GM13976 (cell line): ENCODE measurements at regions of chr7 and their contacts with region 1.

Region 1: DNA sequence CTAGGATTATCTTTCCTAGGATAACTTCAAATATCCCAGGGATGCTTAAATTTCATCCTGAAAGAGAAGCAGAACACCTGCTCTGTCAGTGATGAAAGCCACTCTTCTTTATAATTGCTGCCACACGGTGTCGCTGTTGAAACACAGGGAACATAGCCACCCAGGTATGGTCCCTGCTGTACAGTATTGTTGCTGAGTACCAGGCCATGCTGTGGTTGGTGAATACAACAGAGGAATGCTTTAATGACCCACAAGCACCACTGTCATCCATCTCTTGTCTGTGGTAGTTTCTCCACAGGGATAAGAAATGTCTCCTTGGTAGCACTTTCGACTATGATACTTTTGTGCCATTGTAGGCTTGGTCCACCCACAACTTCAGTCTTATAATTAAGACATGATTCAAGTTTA is 70.6 kb upstream of the STARD3NL start:
- DNase-seq: peak; percentile 48
- CTCF ChIP-seq: peak; percentile 79

Region 2: DNA sequence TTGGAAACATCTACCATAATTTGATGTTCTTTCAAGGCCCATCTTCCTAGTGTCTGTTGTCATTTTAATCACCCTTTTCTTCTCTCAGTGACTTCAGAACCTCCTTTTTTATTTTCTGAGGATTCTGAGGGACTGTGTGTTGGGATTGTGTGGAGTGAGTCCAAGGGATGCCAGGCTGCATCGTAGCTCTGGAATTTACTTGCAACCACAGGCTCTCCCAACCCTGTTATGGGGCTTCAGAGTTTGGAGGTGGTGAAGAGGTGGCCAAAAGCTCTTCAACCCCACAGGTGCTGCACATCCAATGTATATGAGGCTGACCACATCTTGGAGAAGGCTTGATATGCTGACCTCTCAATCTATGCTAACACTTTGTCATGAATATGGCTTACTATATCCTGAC is 503.4 kb before region 1 on chr7:
- in situ Hi-C with region 1: no loop called
- DNase-seq: no peak
- CTCF ChIP-seq: no peak

Region 3: GRCh38 chr7:37901236-37901827 is 206.2 kb before region 1 on chr7:
- in situ Hi-C with region 1: loop called (anchors 10 kb)
- DNase-seq: no peak
- CTCF ChIP-seq: peak; percentile 40

Region 4: GRCh38 chr7:38222481-38223096 is 115.1 kb after region 1 on chr7:
- in situ Hi-C with region 1: loop called (anchors 5 kb)
- DNase-seq: peak; percentile 32
- CTCF ChIP-seq: peak; percentile 78

Region 5: GRCh38 chr7:38318803-38319416 is 211.4 kb after region 1 on chr7:
- in situ Hi-C with region 1: loop called (anchors 10 kb)
- DNase-seq: peak; percentile 67
- CTCF ChIP-seq: peak; percentile 81